ENCODE measurements at regions of chr19 and their contacts with region 1.

Region 1: DNA sequence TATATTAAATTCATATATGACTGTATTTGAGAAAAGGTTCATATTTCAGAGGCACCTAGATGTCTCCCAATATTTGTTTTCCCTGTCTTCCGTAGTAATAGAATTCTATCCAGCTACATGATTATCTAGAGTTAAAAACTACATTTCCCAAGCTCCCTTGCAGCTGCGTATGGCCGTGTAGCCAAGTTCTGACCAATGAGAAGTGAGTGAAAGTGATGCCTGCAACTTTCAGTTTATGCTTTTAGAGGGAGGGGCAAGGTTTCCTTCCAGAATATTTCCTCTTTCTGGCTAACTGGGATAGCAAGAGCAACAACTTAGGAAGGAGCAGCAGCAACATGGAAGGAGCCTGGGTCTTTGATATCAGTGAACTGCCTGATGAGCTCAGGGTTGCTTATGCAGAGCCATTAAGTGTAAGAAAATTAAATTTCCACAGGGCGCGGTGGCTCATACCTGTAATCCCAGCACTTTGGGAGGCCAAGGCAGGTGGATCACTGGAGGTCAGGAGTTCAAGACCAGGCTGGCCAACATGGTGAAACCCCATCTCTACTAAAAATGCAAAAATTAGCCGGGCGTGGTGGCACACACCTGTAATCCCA is 23.2 kb upstream of the CYP2A13 start:
- DNase-seq: no peak
- H3K4me3 ChIP-seq: no peak overlapping the region
- CTCF ChIP-seq: no peak
- POLR2A ChIP-seq: no peak

Region 2: DNA sequence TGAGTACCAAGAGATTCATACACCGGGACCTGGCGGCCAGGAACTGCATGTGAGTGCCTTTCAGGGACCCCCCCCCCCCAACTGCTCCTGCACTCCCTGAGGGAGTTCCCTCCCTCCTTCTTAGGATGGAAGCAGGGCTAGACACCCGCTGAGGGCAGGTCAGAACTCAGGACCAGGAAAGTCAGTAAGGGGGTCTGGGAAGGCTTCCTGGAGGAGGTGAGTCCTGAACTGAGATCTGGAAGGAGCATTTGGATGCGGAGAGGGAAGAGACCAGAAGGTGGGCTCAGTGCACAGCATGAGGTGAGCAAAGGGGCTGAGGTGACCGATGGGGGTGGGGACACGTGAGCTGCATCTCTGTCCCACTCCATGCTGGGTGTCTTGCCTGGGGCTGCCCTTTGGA is 188.6 kb after region 1 on chr19:
- intact Hi-C with region 1: no loop called
- DNase-seq: no peak
- H3K4me3 ChIP-seq: no peak overlapping the region
- CTCF ChIP-seq: no peak
- POLR2A ChIP-seq: no peak

Region 3: DNA sequence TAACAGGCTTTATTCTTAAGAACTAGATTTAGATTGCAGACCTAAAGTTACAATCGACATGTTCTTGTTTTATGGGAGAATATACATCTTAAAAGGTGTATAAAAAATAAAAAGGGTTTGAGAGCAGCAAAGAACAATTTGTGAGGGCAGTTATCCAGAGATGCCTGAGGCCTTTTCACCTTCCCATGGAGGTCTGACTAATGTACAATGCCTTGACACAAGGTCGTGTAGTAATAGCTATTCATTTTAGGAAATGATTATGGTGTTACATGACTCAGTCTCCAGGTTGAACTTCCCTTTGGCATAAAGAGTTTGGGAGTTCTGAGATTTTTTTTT is 710.3 kb after region 1 on chr19:
- intact Hi-C with region 1: loop called (anchors 5 kb)
- DNase-seq: no peak
- H3K4me3 ChIP-seq: no peak overlapping the region
- CTCF ChIP-seq: no peak
- POLR2A ChIP-seq: no peak

Measured in lower leg skin (tissue), 4 donors.